A549 (cell line): ENCODE measurements at regions of chr7 and their contacts with region 1.

Region 1: GRCh38 chr7:12623897-12624498 is 53.5 kb downstream of the SCIN start:
- DNase-seq: peak; percentile 21 to 35
- ATAC-seq: peak; percentile 34 to 68; a peak in 3 of 6 replicates
- H3K4me3 ChIP-seq: no peak overlapping the region
- H3K27ac ChIP-seq: no peak overlapping the region
- H3K4me1 ChIP-seq: peaks cover 6% of the 10 kb centered on the region; the same call in 2 of the 3 replicates
- CTCF ChIP-seq: peak; percentile 90
- EP300 ChIP-seq: no peak
- POLR2A ChIP-seq: no peak
- RAD21 ChIP-seq: peak; percentile 91 to 92

Region 2: GRCh38 chr7:12504149-12504548 is 119.8 kb before region 1 on chr7:
- CTCF ChIA-PET with region 1: no interaction called
- POLR2A ChIA-PET with region 1: no interaction called
- DNase-seq: no peak
- ATAC-seq: no peak
- H3K4me3 ChIP-seq: no peak overlapping the region
- H3K27ac ChIP-seq: no peak overlapping the region
- H3K4me1 ChIP-seq: no peaks in the 10 kb centered on the region
- CTCF ChIP-seq: no peak
- EP300 ChIP-seq: no peak
- POLR2A ChIP-seq: no peak
- RAD21 ChIP-seq: no peak

Region 3: GRCh38 chr7:12531784-12532183 is 92.2 kb before region 1 on chr7:
- CTCF ChIA-PET with region 1: interaction called, 14 read pairs
- POLR2A ChIA-PET with region 1: no interaction called
- DNase-seq: no peak
- ATAC-seq: no peak
- H3K4me3 ChIP-seq: no peak overlapping the region
- H3K27ac ChIP-seq: no peak overlapping the region
- H3K4me1 ChIP-seq: no peaks in the 10 kb centered on the region
- CTCF ChIP-seq: no peak
- EP300 ChIP-seq: no peak
- POLR2A ChIP-seq: no peak
- RAD21 ChIP-seq: no peak

Region 4: GRCh38 chr7:12607134-12607533 is 16.9 kb before region 1 on chr7:
- CTCF ChIA-PET with region 1: interaction called, 10 read pairs
- POLR2A ChIA-PET with region 1: no interaction called
- DNase-seq: no peak
- ATAC-seq: no peak
- H3K4me3 ChIP-seq: no peak overlapping the region
- H3K27ac ChIP-seq: no peak overlapping the region
- H3K4me1 ChIP-seq: no peaks in the 10 kb centered on the region
- CTCF ChIP-seq: no peak
- EP300 ChIP-seq: no peak
- POLR2A ChIP-seq: no peak
- RAD21 ChIP-seq: no peak